CD14-positive monocyte (primary cell): ENCODE measurements at regions of chr20 and their contacts with region 1.

Region 1: DNA sequence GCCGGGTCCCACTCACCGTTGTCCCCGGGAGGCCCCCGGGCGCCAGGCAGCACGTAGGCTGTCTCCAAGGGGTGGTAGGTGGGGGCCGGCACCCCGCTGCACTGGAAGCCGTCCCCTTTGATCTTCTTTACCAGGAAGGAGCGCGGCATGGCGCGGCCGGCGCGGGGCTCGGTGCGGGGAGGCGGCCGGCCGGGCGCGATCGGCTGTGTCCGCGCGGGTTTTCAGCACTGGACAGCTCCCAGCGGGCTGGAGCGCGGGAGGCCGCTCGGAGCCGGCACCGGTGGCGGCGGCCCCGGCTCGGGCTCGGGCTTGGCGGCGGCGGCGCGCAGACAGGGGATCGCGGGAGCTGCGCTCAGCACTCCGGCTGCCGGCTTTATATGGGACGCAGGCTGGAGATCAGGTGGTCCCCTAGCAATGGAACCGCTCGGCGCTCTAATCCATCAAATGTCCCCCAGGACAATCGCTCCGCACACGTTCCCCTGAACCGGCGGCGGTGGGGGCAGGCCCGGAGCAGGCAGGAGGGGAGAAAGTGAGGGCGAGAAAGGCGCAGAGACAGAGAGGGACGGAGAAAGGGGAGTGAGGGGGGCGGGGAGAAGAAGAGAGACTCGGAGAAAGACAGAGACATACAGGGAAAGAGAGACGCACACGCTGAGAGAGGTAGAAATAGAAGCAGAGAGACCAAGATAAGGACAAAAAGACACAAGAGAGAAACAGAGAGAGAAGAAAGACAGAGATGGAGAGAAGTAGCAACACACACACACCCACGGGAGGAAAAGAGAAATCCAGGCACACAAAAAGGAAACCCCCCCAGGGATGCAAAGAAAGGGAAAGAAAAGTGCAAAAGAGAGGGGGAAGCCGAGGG is at the start of gene SCRT2:
- DNase-seq: peak; percentile 53 to 67 (median 65)
- H3K4me3 ChIP-seq: peak within 1 kb of the TSS in 1 of 3 experiments; percentile 53
- H3K4me3 Mint-ChIP-seq: peak within 1 kb of the TSS; percentile 53 to 89
- H3K27ac ChIP-seq: no peak within 1 kb of the TSS
- H3K27ac Mint-ChIP-seq: peak within 1 kb of the TSS in 2 of 7 donors; percentile 18 to 80
- H3K4me1 ChIP-seq: peaks cover 29 to 31% of the 10 kb centered on the region in 2 donors
- H3K4me1 Mint-ChIP-seq: peaks cover 37% of the 10 kb centered on the region
- H3K27me3 ChIP-seq: peaks cover 30 to 52% of the 10 kb centered on the region in 2 donors
- H3K27me3 Mint-ChIP-seq: peaks cover 54 to 63% (median 57%) of the 10 kb centered on the region in 3 donors
- CTCF ChIP-seq: no peak
- polyA plus RNA-seq, gene SCRT2: not detected

Region 2: GRCh38 chr20:278607-279571 is 396.8 kb before region 1 on chr20:
- intact Hi-C with region 1: no loop called
- DNase-seq: peak in 1 of 3 donors; percentile 46
- H3K4me3 ChIP-seq: peak overlapping the region in 2 of 3 experiments; percentile 24 to 63
- H3K4me3 Mint-ChIP-seq: peak overlapping the region in 1 of 2 donors; percentile 51
- H3K27ac ChIP-seq: no peak overlapping the region
- H3K27ac Mint-ChIP-seq: no peak overlapping the region
- H3K4me1 ChIP-seq: peaks cover 0 to 6% of the 10 kb centered on the region in 2 donors
- H3K4me1 Mint-ChIP-seq: no peaks in the 10 kb centered on the region
- H3K27me3 ChIP-seq: no peaks in the 10 kb centered on the region
- H3K27me3 Mint-ChIP-seq: peaks cover 0 to under 1% (median 0%) of the 10 kb centered on the region in 3 donors
- CTCF ChIP-seq: no peak

Region 3: GRCh38 chr20:549722-550496 is 125.8 kb before region 1 on chr20:
- intact Hi-C with region 1: loop called in 1 of 2 experiments (anchors 5 kb)
- DNase-seq: no peak
- H3K4me3 ChIP-seq: no peak overlapping the region
- H3K4me3 Mint-ChIP-seq: no peak overlapping the region
- H3K27ac ChIP-seq: no peak overlapping the region
- H3K27ac Mint-ChIP-seq: no peak overlapping the region
- H3K4me1 ChIP-seq: no peaks in the 10 kb centered on the region
- H3K4me1 Mint-ChIP-seq: no peaks in the 10 kb centered on the region
- H3K27me3 ChIP-seq: peaks cover 5 to 6% of the 10 kb centered on the region in 2 donors
- H3K27me3 Mint-ChIP-seq: peaks cover 11 to 31% (median 19%) of the 10 kb centered on the region in 3 donors
- CTCF ChIP-seq: no peak

Region 4: DNA sequence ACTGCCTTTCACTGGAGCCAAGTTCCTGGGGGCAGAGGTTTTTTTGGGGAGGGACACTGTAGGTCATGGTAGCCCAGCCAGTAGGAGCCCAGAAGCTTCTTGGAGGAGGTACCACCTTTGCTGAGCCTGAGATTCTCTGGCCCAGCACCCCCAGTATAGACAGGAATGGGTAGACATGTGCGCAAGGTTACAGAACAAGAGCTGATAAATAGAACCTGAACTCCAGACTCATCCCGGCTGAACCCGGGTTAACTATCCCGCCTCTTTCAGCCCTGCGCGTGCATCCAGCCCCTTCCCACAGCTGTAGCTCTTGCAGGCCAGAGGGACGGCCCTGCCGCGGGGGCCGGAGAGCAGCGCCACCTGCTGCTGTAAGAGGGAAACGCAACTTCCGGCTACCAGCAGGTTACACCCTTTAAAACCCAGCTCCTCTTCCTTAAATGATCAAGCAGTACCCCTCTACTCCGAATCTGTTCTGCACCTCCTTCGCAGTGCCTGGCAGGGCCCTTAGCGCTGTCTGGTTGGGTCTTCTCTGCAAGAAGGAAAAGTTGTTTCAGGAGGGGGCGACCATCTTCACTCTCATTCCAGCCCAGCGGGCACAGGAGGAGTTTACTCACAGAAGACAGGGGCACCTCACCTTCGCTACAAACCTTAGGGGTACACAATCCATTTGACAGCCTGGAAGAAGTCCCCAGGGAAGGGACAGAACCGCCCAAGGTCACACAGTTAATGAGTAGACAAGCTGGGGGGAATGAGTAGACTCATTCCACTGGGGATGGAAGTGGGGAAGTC is 30.2 kb before region 1 on chr20:
- intact Hi-C with region 1: no loop called
- DNase-seq: peak; percentile 68 to 74 (median 72)
- H3K4me3 ChIP-seq: no peak overlapping the region
- H3K4me3 Mint-ChIP-seq: no peak overlapping the region
- H3K27ac ChIP-seq: no peak overlapping the region
- H3K27ac Mint-ChIP-seq: peak overlapping the region in 3 of 7 donors; percentile 45 to 71 (median 60)
- H3K4me1 ChIP-seq: peaks cover 7 to 8% of the 10 kb centered on the region in 2 donors
- H3K4me1 Mint-ChIP-seq: peaks cover 15% of the 10 kb centered on the region
- H3K27me3 ChIP-seq: peaks cover 3 to 15% of the 10 kb centered on the region in 2 donors
- H3K27me3 Mint-ChIP-seq: peaks cover 15 to 27% (median 26%) of the 10 kb centered on the region in 3 donors
- CTCF ChIP-seq: peak; percentile 99

Region 5: GRCh38 chr20:719816-720215 is 44.1 kb after region 1 on chr20:
- intact Hi-C with region 1: no loop called
- DNase-seq: no peak
- H3K4me3 ChIP-seq: no peak overlapping the region
- H3K4me3 Mint-ChIP-seq: no peak overlapping the region
- H3K27ac ChIP-seq: no peak overlapping the region
- H3K27ac Mint-ChIP-seq: peak overlapping the region in 1 of 7 donors; percentile 60
- H3K4me1 ChIP-seq: no peaks in the 10 kb centered on the region
- H3K4me1 Mint-ChIP-seq: peaks cover 3% of the 10 kb centered on the region
- H3K27me3 ChIP-seq: no peaks in the 10 kb centered on the region
- H3K27me3 Mint-ChIP-seq: peaks cover 6 to 21% (median 10%) of the 10 kb centered on the region in 3 donors
- CTCF ChIP-seq: no peak